ENCODE measurements at regions of chr17 and their contacts with region 1.

Region 1: GRCh38 chr17:68484458-68484857 is 27.2 kb upstream of the WIPI1 start:
- DNase-seq: peak; percentile 70
- ATAC-seq: no peak
- H3K4me3 ChIP-seq: peak overlapping the region in 1 of 3 experiments; percentile 34; a peak in 1 of 6 replicates
- H3K27ac ChIP-seq: peak overlapping the region; percentile 80
- H3K4me1 ChIP-seq: peaks cover 76% of the 10 kb centered on the region
- H3K27me3 ChIP-seq: no peaks in the 10 kb centered on the region
- CTCF ChIP-seq: no peak
- EP300 ChIP-seq: no peak
- POLR2A ChIP-seq: no peak
- RAD21 ChIP-seq: no peak

Region 2: DNA sequence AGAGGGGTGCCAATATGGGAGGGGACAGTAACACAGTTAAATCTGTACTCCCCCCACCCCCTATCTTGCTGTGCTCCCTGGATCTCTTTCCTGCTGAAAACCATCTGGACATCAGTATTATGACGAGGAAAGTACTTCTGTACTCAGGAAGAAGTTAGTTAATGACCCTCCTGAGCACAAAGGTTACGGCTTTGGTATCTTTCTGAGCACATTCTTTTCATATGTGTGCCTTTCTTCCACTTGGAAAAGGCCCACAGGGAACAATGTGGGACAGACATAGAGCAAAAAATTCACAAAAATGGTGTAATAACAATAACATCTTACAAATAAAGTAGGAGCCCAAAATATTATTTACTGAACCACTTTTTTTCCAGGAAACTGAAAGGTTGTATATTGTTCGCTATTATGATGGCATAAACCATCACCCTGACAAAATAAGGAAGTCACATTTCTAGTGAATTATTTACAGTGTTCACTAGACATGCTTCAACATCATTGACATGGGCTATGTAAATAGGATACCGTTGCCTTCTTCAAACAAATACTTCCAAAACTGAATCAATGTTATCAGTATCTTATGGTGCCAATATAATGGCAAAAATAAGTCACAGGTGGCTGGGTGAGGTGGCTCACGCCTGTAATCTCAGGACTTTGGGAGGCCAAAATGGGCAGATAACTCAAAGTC is 32.6 kb before region 1 on chr17:
- CTCF ChIA-PET with region 1: no interaction called
- POLR2A ChIA-PET with region 1: no interaction called
- in situ Hi-C with region 1: no loop called
- intact Hi-C with region 1: no loop called
- DNase-seq: peak; percentile 61
- ATAC-seq: no peak; the same call in 2 of the 3 replicates
- H3K4me3 ChIP-seq: no peak overlapping the region
- H3K27ac ChIP-seq: peak overlapping the region; percentile 23
- H3K4me1 ChIP-seq: peaks cover 62% of the 10 kb centered on the region
- H3K27me3 ChIP-seq: no peaks in the 10 kb centered on the region
- CTCF ChIP-seq: no peak
- EP300 ChIP-seq: 0 out of 4 replicates have a peak, but pooled peaks of 1 of the 2 experiments have one; percentile 9
- POLR2A ChIP-seq: no peak
- RAD21 ChIP-seq: no peak

Region 3: DNA sequence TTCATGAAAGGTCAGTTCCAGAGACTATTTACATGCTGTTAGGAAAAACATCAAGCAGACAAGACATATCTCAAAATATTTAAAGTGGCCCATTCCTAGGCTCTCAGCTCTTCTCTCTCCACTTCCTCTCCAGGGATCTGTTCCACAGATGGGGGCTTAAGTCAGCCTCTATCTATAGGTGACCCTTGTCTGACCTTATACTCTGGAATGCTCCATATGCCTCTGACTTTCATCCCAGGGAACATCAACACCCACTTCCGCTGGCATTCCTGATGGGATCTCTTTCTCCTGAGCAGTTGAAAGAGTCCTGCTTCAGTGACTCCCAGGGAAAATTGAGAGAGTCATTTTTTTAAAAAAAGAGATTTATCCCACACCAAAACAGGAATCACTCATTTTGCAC is 15.7 kb before region 1 on chr17:
- CTCF ChIA-PET with region 1: no interaction called
- POLR2A ChIA-PET with region 1: interaction called, 26 read pairs
- in situ Hi-C with region 1: no loop called
- intact Hi-C with region 1: no loop called
- DNase-seq: peak; percentile 76
- ATAC-seq: no peak
- H3K4me3 ChIP-seq: no peak overlapping the region
- H3K27ac ChIP-seq: no peak overlapping the region
- H3K4me1 ChIP-seq: peaks cover 40% of the 10 kb centered on the region
- H3K27me3 ChIP-seq: no peaks in the 10 kb centered on the region
- CTCF ChIP-seq: no peak
- EP300 ChIP-seq: no peak
- POLR2A ChIP-seq: no peak
- RAD21 ChIP-seq: no peak